ENCODE measurements at regions of chr19 and their contacts with region 1.

Region 1: GRCh38 chr19:38869856-38870607 is 8.0 kb downstream of the RINL start:
- DNase-seq: peak; percentile 91
- H3K4me3 ChIP-seq: peak overlapping the region; percentile 31 to 35; a peak in 3 of 4 replicates
- H3K27ac ChIP-seq: no peak overlapping the region
- H3K4me1 ChIP-seq: peaks cover 0 to 15% of the 10 kb centered on the region in 2 experiments; a peak in 1 of 4 replicates
- H3K27me3 ChIP-seq: no peaks in the 10 kb centered on the region
- CTCF ChIP-seq: peak; percentile 71
- EP300 ChIP-seq: no peak
- RAD21 ChIP-seq: peak; percentile 55

Region 2: DNA sequence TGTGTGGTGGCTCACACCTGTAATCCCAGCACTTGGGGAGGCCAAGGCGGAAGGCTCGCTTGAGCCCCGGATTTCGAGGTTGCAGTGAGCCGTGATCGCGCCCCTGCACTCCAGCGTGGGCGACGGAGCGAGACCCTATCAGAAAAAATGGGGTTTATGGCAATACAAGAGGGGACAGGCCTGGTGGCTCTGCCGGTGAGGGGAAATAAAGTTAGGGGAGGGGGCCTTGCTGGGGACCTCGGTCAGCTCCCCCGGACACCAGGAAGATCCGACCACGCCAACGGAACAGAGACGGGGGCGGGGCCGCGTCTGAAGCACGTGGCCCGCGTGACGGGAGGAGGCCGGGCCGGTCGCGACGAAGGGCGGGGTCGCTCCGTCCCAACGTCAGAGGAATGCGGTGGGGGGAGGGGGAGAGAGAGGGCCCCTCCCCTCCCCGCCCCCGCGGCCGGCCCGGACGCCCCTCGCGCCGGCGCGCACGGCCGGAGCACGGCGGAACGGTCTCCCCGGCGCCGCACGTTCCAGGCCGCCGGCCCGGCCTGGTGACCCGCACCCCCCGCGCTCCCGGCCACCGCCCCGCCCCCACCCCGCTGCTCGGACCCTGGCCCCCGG is 18.3 kb before region 1 on chr19:
- CTCF ChIA-PET with region 1: interaction called, 15 read pairs
- POLR2A ChIA-PET with region 1: interaction called, 3 read pairs
- DNase-seq: peak; percentile 95
- H3K4me3 ChIP-seq: peak overlapping the region; percentile 64 to 87
- H3K27ac ChIP-seq: peak overlapping the region; percentile 95 to 97
- H3K4me1 ChIP-seq: peaks cover 18 to 30% of the 10 kb centered on the region in 2 experiments; a peak in 1 of 4 replicates
- H3K27me3 ChIP-seq: no peaks in the 10 kb centered on the region
- CTCF ChIP-seq: no peak
- EP300 ChIP-seq: peak in 1 of 2 experiments; percentile 33; a peak in 1 of 4 replicates
- RAD21 ChIP-seq: no peak

Region 3: DNA sequence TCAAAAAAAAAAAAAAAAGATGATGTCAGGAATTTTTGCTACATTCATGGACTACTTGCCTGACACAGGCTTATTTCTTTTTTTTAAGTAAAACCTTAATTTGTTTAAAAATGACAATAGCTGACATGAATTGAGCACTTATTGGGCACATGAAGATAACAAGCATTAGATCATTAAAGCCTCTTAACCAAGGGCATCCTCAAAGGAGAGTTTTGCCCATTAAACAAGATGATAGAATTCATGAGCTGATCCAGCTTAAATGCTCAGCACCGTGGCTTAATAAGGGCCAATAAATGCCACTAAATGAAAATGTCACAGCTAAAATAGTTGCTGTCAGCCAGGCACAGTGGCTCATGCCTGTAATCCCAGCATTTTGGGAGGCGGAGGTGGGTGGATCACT is 86.2 kb after region 1 on chr19:
- CTCF ChIA-PET with region 1: no interaction called
- POLR2A ChIA-PET with region 1: no interaction called
- DNase-seq: no peak
- H3K4me3 ChIP-seq: no peak overlapping the region
- H3K27ac ChIP-seq: no peak overlapping the region
- H3K4me1 ChIP-seq: no peaks in the 10 kb centered on the region
- H3K27me3 ChIP-seq: no peaks in the 10 kb centered on the region
- CTCF ChIP-seq: no peak
- EP300 ChIP-seq: no peak
- RAD21 ChIP-seq: no peak